ENCODE measurements at regions of chr3 and their contacts with region 1.

Region 1: GRCh38 chr3:33131331-33132018 is 17.7 kb downstream of the CRTAP start:
- DNase-seq: peak; percentile 44
- H3K4me3 ChIP-seq: no peak overlapping the region
- H3K27ac ChIP-seq: no peak overlapping the region
- H3K4me1 ChIP-seq: no peaks in the 10 kb centered on the region
- H3K27me3 ChIP-seq: no peaks in the 10 kb centered on the region
- CTCF ChIP-seq: peak; percentile 54 to 72 (median 72)
- POLR2A ChIP-seq: no peak

Region 2: DNA sequence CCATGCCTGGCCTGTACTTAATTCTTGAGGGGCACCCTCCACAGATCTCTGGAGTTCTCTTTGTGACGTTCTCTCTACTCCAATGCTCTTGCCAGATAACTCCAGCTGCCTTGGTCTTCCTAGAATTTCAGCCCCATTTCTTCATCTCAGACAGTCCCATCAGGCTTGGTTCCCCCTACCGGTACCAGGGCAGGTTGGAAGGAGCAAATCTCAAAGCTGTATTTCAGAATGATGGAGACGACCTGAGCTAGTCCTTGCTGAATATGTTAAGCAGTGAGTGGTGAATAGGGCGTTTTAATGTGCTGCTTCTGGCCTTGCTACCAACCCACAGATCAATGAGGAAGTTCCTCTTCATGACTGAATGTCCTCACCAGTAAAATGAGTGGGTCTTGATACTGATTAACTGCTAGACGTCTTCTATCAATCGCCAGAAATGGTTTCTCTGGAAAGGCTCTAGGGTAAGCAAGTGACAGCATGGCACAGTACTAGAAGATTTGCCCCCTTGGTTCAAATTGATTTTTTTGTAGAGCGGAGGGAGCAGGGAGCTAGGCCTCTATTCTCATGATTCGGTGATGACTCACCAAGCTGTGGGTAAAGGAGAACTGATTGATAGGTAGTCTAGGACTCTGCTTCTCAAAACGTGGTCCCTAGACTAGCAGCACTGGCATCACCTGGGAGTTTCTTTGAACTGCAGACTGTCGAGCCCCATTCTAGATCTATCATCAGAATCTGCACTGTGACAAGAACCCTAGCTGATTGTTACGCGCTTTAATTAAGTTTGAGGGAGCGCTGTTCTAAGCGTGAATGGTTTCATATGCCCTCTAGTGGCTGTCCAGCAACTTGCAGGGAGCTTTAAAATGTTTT is 241.0 kb after region 1 on chr3:
- intact Hi-C with region 1: loop called (anchors 1 kb)
- DNase-seq: peak; percentile 27
- H3K4me3 ChIP-seq: no peak overlapping the region
- H3K27ac ChIP-seq: no peak overlapping the region
- H3K4me1 ChIP-seq: no peaks in the 10 kb centered on the region
- H3K27me3 ChIP-seq: no peaks in the 10 kb centered on the region
- CTCF ChIP-seq: peak; percentile 72 to 82 (median 80)
- POLR2A ChIP-seq: no peak

Measured in prostate gland (tissue), 2 donors.